ENCODE measurements at regions of chr6 and their contacts with region 1.

Region 1: DNA sequence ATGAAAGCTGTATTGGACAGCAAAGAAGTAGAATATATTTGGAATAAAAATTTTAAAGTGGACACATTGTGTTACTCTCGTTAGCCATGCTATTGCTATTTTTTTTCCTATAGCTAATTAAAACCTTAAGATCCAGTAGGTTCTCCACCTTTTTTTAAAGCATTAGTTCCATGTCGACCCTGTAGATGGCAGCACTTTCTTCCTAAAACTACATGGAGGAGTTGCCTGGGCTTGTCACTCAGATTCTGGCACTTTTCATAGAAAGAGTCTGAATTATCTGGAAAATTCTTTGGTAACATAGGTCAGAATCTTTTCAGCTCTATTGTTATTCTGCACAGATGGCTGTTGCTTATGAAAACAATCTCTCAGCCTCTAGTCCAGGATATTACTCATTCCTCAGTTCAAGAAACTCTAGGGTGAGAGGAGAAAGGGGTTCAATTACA is 42.0 kb upstream of the ESR1 start:
- DNase-seq: peak; percentile 50
- H3K4me3 Mint-ChIP-seq: no peak overlapping the region
- H3K27ac Mint-ChIP-seq: no peak overlapping the region
- H3K4me1 Mint-ChIP-seq: peaks cover 9% of the 10 kb centered on the region
- H3K27me3 Mint-ChIP-seq: no peaks in the 10 kb centered on the region
- CTCF ChIP-seq: no peak

Region 2: DNA sequence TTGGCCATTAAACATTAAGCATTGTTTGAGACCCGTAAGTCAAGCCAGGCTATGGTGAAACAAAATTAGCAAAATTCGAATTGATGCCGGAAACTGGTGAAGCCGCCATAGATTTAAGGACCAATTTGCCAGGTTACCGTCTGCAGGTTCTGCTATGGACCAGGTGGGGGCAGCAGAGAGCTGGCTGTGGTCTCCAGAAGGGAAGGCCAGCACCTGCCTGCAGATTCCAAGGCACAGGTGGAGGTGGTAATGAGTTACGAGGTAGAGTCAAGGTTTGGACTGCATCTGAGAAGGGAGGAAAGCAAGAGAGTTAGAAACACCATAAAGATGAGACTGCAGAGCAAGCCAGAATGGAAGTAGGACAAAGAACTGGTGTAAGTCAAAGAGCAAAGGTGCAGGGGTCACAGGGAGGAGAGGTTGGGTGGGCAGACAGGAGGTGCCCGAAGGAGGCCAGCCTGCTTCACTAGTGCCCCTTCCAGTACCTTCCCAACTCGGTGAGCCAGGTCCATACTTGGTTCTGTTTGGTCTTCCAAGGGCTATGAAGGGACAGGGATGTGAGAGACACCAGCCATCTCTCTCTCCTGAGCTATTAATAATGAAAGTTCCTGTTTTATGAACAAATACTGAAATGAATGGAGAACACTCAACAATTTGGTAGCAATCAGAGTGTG is 89.6 kb before region 1 on chr6:
- CTCF ChIA-PET with region 1: no interaction called
- intact Hi-C with region 1: loop called (anchors 5 kb)
- DNase-seq: peak; percentile 64
- H3K4me3 Mint-ChIP-seq: no peak overlapping the region
- H3K27ac Mint-ChIP-seq: no peak overlapping the region
- H3K4me1 Mint-ChIP-seq: peaks cover 9% of the 10 kb centered on the region
- H3K27me3 Mint-ChIP-seq: no peaks in the 10 kb centered on the region
- CTCF ChIP-seq: peak; percentile 78

Region 3: GRCh38 chr6:151900730-151901433 is 135.4 kb after region 1 on chr6:
- CTCF ChIA-PET with region 1: no interaction called
- intact Hi-C with region 1: loop called (anchors 10 kb)
- DNase-seq: peak; percentile 74
- H3K4me3 Mint-ChIP-seq: peak overlapping the region; percentile 24
- H3K27ac Mint-ChIP-seq: peak overlapping the region; percentile 88
- H3K4me1 Mint-ChIP-seq: peaks cover 32% of the 10 kb centered on the region
- H3K27me3 Mint-ChIP-seq: no peaks in the 10 kb centered on the region
- CTCF ChIP-seq: no peak

Region 4: DNA sequence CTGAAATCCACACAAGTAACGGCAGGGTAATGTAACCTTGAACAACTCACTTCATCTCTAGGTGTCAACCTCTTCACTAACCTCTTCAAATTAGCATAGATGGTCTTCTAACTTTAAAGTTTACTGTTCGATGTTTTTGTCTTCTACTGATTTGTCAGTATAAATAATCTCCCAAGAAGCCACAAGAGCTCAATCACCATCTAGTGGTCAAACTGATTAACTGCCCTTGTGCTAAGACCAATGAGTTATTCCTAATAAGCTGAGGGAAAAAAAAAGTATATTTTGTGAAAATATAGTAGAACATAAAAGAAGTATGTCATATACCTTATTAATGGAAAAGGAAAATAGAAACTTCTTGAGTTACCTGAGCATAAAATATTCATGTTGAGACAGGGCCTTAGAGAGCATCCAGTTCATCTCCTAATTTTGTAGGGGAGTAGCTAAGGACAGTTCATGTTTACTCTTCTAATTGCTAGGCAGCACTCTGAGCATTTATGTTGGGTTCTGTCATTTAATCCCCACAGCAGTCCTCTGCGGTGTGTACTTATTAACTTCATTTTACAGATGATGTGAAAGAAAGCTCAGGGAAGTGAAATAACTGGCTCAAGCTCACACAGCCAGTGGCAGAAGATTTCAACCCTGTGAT is 359.1 kb after region 1 on chr6:
- CTCF ChIA-PET with region 1: interaction called, 17 read pairs
- intact Hi-C with region 1: loop called (anchors 1 kb)
- DNase-seq: no peak
- H3K4me3 Mint-ChIP-seq: no peak overlapping the region
- H3K27ac Mint-ChIP-seq: no peak overlapping the region
- H3K4me1 Mint-ChIP-seq: no peaks in the 10 kb centered on the region
- H3K27me3 Mint-ChIP-seq: no peaks in the 10 kb centered on the region
- CTCF ChIP-seq: no peak

Region 5: GRCh38 chr6:152267967-152268845 is 502.7 kb after region 1 on chr6:
- CTCF ChIA-PET with region 1: no interaction called
- intact Hi-C with region 1: loop called (anchors 2 kb)
- DNase-seq: peak; percentile 6
- H3K4me3 Mint-ChIP-seq: no peak overlapping the region
- H3K27ac Mint-ChIP-seq: no peak overlapping the region
- H3K4me1 Mint-ChIP-seq: no peaks in the 10 kb centered on the region
- H3K27me3 Mint-ChIP-seq: no peaks in the 10 kb centered on the region
- CTCF ChIP-seq: peak; percentile 42

Measured in Calu3 (cell line).